IMR-90 (cell line): ENCODE measurements at regions of chr1 and their contacts with region 1.

Region 1: DNA sequence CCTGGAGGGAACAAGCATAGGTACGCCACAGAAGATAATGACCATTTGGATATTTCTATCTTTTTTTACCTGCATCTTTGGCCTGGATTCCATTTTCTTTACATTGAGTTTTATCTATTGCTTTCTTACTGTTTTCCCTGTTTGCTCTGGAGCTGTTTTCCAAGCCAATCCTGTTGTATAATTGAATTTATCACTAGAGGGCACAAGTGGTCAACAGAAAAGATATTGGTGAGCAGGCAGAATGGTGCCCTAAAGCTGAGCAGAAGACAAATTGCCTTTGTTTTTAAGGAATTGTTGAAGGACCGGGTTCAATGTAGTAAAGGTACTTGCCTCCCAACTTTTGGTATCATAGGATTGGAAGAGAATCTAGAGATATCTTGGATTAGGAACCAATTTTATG is 152.8 kb downstream of the PPP1R12B start:
- DNase-seq: peak; percentile 48
- ATAC-seq: peak; percentile 46
- H3K4me3 ChIP-seq: no peak overlapping the region
- H3K27ac ChIP-seq: no peak overlapping the region
- H3K4me1 ChIP-seq: peaks cover 5% of the 10 kb centered on the region; the same call in 1 of the 2 replicates
- H3K27me3 ChIP-seq: no peaks in the 10 kb centered on the region
- CTCF ChIP-seq: peak; percentile 58
- POLR2A ChIP-seq: no peak
- RAD21 ChIP-seq: peak; percentile 79

Region 2: GRCh38 chr1:202571347-202572339 is 70.4 kb after region 1 on chr1:
- CTCF ChIA-PET with region 1: interaction called, 5 read pairs
- POLR2A ChIA-PET with region 1: no interaction called
- dilution Hi-C with region 1: no loop called
- in situ Hi-C with region 1: no loop called
- intact Hi-C with region 1: loop called (anchors 1 kb)
- DNase-seq: peak; percentile 59
- ATAC-seq: peak; percentile 55
- H3K4me3 ChIP-seq: no peak overlapping the region
- H3K27ac ChIP-seq: no peak overlapping the region
- H3K4me1 ChIP-seq: peaks cover 29% of the 10 kb centered on the region
- H3K27me3 ChIP-seq: no peaks in the 10 kb centered on the region
- CTCF ChIP-seq: peak; percentile 86
- POLR2A ChIP-seq: no peak
- RAD21 ChIP-seq: peak; percentile 80

Region 3: DNA sequence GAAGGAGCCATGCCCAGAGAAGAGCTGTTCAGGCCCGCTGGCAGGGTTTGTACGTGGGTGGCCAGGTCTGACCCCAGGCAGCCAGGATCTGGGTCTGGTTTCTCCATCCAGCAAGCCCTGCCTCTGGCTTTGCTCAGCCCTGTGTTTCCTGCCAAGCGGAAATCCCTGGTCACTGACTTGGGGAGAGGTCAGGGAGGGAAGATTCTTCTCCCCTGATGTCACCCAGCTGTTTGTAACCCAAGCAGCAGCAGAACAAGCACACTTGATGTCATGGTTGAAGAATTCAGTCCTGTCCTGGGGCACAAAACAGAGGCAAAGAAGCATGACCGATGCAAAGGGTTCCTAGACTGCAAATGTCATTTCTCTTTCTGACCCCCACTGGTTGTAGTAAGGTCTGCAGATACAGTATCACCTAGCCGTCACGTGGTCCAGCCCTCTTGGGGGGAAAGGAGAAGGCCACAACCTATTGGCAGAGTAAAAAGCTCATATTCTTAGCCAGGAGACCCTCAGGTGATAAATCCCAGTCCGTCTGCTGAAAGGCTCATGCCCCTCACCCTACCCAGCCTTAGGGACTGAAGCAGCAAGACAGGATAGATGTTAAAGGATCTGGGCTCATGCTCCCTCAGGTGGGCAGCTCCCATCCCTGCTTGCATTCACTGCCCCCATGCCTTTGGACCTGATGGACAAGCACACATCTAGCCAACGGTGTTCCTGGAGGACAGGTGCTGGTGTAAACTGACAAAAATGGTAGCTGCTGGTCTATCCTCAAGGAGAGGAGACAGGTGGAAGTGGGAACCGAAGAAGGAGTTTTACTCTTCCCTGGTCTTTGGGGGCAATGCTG is 88.1 kb after region 1 on chr1:
- CTCF ChIA-PET with region 1: no interaction called
- POLR2A ChIA-PET with region 1: interaction called, 5 read pairs
- dilution Hi-C with region 1: no loop called
- in situ Hi-C with region 1: no loop called
- intact Hi-C with region 1: loop called (anchors 5 kb)
- DNase-seq: peak; percentile 100
- ATAC-seq: peak; percentile 87
- H3K4me3 ChIP-seq: no peak overlapping the region
- H3K27ac ChIP-seq: peak overlapping the region; percentile 79
- H3K4me1 ChIP-seq: peaks cover 48% of the 10 kb centered on the region
- H3K27me3 ChIP-seq: no peaks in the 10 kb centered on the region
- CTCF ChIP-seq: peak; percentile 21; the same call in 1 of the 2 replicates
- POLR2A ChIP-seq: no peak
- RAD21 ChIP-seq: peak; percentile 1; the same call in 1 of the 2 replicates

Region 4: GRCh38 chr1:202599677-202600431 is 98.6 kb after region 1 on chr1:
- CTCF ChIA-PET with region 1: interaction called, 9 read pairs
- POLR2A ChIA-PET with region 1: no interaction called
- dilution Hi-C with region 1: no loop called
- in situ Hi-C with region 1: no loop called
- intact Hi-C with region 1: loop called (anchors 1 kb)
- DNase-seq: peak; percentile 84
- ATAC-seq: peak; percentile 100
- H3K4me3 ChIP-seq: no peak overlapping the region
- H3K27ac ChIP-seq: peak overlapping the region; percentile 56; the same call in 1 of the 2 replicates
- H3K4me1 ChIP-seq: peaks cover 6% of the 10 kb centered on the region; the same call in 1 of the 2 replicates
- H3K27me3 ChIP-seq: no peaks in the 10 kb centered on the region
- CTCF ChIP-seq: peak; percentile 95
- POLR2A ChIP-seq: no peak
- RAD21 ChIP-seq: peak; percentile 96

Region 5: DNA sequence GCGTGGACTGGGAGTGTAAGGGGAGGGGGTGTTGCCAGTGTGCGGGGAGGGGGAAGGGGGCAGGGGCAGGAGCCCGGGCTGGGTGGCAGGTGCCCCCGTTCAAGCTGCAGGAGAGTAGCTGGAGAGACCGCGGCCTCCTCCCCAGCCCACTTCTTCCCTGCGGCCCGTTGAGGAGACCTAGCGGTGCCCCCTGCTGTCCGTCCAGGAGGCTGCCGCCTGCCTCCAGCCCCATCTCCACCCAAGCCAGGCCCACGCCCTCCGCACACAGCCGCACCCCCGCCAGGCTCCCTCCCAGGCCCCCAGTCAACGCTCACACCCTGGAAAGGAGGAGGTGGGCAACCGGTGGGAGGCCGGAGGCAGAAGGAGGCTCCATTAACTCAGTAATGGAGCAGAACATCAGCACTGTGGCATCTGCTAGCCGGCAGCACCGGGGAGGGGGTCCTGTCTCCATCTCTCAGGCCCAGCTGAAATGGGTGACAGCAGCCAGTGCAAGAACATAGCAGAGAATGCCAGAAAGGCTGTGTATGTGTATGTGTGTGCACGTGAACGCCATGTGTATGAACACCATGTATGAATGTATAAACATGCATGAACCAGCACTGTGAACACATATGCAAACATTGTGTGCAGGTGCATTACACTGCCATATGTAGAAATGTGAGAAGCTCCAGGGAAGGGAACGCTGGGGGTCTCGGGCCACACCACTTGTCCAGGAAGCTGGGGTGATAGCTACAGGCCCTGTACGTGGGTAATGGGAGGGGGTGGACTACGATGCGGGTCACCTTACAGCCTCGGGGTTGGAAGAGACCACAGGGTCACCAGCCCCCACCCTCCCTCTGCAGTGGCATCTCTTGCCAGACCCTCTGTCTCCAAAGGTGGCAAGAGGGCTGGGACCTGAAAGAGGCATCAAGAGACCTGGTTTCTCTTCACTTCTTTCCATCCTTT is 124.4 kb after region 1 on chr1:
- CTCF ChIA-PET with region 1: no interaction called
- POLR2A ChIA-PET with region 1: no interaction called
- dilution Hi-C with region 1: no loop called
- in situ Hi-C with region 1: no loop called
- intact Hi-C with region 1: loop called (anchors 1 kb)
- DNase-seq: peak; percentile 57
- ATAC-seq: peak; percentile 89
- H3K4me3 ChIP-seq: no peak overlapping the region
- H3K27ac ChIP-seq: no peak overlapping the region
- H3K4me1 ChIP-seq: peaks cover 7% of the 10 kb centered on the region
- H3K27me3 ChIP-seq: peaks cover 7% of the 10 kb centered on the region
- CTCF ChIP-seq: peak; percentile 71
- POLR2A ChIP-seq: no peak
- RAD21 ChIP-seq: peak; percentile 71

Region 6: DNA sequence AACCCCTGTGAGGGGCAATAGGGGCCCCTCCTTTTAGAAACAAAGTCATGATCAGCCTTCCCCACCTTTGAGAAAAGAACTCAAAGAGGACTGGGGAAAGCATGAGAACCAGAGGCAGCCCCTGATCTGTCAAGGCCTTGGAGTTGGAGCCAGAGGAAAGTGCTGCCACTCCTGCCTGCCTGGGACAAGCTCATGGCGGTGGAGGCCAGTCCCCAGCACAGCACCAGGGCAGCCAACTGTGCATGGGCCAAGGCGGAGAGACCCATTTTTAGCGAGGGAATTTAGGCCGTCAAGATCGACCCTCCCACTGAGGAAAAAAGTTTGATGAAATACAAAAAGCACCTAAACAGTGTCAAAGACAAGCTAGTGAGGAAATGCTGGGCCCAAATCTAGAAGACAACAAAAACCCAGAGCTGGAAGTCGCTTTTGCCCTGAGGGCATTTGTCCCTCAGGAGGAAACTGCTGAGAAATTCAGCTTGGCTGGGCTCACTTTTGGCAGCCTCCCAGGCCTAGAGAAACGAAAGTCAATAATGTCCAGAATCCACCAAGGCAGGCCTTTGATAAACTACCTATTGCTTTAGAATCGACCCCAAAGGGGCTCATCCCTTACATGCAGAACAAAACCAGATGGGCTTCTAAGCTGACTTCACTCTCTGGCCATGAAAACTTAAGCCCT is 170.0 kb after region 1 on chr1:
- CTCF ChIA-PET with region 1: no interaction called
- POLR2A ChIA-PET with region 1: no interaction called
- dilution Hi-C with region 1: no loop called
- in situ Hi-C with region 1: no loop called
- intact Hi-C with region 1: no loop called
- DNase-seq: no peak
- ATAC-seq: no peak
- H3K4me3 ChIP-seq: no peak overlapping the region
- H3K27ac ChIP-seq: no peak overlapping the region
- H3K4me1 ChIP-seq: no peaks in the 10 kb centered on the region
- H3K27me3 ChIP-seq: peaks cover 42% of the 10 kb centered on the region
- CTCF ChIP-seq: no peak
- POLR2A ChIP-seq: no peak
- RAD21 ChIP-seq: no peak

Region 7: GRCh38 chr1:202698276-202698675 is 197.0 kb after region 1 on chr1:
- CTCF ChIA-PET with region 1: no interaction called
- POLR2A ChIA-PET with region 1: no interaction called
- dilution Hi-C with region 1: no loop called
- in situ Hi-C with region 1: no loop called
- intact Hi-C with region 1: no loop called
- DNase-seq: no peak
- ATAC-seq: no peak
- H3K4me3 ChIP-seq: no peak overlapping the region
- H3K27ac ChIP-seq: no peak overlapping the region
- H3K4me1 ChIP-seq: no peaks in the 10 kb centered on the region
- H3K27me3 ChIP-seq: peaks cover 69% of the 10 kb centered on the region
- CTCF ChIP-seq: no peak
- POLR2A ChIP-seq: no peak
- RAD21 ChIP-seq: no peak

Region 8: GRCh38 chr1:202710070-202711045 is 209.1 kb after region 1 on chr1 and contains the start of gene SYT2:
- CTCF ChIA-PET with region 1: no interaction called
- POLR2A ChIA-PET with region 1: no interaction called
- dilution Hi-C with region 1: no loop called
- in situ Hi-C with region 1: loop called (anchors 10 kb)
- intact Hi-C with region 1: no loop called
- DNase-seq: no peak
- ATAC-seq: peak; percentile 83
- H3K4me3 ChIP-seq: peak within 1 kb of the TSS; percentile 26; the same call in 1 of the 2 replicates
- H3K27ac ChIP-seq: no peak within 1 kb of the TSS
- H3K4me1 ChIP-seq: peaks cover 4% of the 10 kb centered on the region; the same call in 1 of the 2 replicates
- H3K27me3 ChIP-seq: peaks cover 79% of the 10 kb centered on the region
- CTCF ChIP-seq: no peak
- POLR2A ChIP-seq: no peak
- RAD21 ChIP-seq: no peak
- total RNA-seq, gene SYT2: under 0.01 TPM in 2 replicates

Region 9: GRCh38 chr1:202716654-202717053 is 215.4 kb after region 1 on chr1:
- CTCF ChIA-PET with region 1: interaction called, 4 read pairs
- POLR2A ChIA-PET with region 1: no interaction called
- dilution Hi-C with region 1: no loop called
- in situ Hi-C with region 1: loop called (anchors 10 kb)
- intact Hi-C with region 1: loop called (anchors 1 kb)
- DNase-seq: no peak
- ATAC-seq: no peak
- H3K4me3 ChIP-seq: no peak overlapping the region
- H3K27ac ChIP-seq: no peak overlapping the region
- H3K4me1 ChIP-seq: no peaks in the 10 kb centered on the region
- H3K27me3 ChIP-seq: peaks cover 35% of the 10 kb centered on the region
- CTCF ChIP-seq: no peak
- POLR2A ChIP-seq: no peak
- RAD21 ChIP-seq: no peak

Region 10: DNA sequence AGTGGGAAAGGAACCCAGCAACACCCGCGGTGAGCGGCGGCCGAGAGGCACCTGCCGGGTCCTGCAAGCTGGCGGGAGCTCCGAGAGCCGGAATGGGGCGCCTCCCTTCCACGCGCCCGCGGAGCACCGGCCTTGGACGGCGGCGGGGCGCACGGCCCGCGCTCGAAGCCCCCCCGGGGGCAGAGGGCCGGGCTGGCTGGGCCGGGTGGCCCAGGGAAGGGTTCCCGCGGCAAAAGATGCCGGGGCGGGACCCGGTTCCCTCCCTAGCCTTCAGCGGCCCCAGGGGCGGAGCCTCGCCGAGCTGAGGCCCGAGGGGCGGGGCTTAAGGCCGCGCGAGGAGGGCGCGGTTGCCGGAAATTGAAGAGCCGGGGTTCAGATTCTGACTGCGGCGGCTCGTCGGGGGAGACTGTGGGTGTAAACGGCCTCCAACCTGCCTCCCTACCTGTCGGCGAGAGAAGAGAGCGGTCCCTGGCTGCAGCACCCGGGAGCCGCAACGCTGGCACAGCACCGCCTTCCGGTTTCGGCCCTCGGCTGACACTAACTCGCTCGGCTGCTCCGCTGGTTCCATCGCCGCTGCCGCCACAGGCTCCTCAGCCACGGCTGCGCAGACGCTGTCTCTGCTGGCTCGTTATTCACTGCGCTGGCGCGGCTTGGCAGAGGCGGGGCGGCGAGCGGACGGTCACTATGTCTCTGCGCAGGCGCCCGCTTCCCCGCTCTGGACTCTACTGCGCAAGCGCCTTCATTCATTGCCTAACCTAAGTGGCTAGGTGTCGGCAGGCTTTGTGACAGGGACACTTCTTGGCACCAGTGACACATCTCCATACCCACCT is 387.5 kb after region 1 on chr1 and contains the start of gene RABIF:
- CTCF ChIA-PET with region 1: no interaction called
- POLR2A ChIA-PET with region 1: no interaction called
- dilution Hi-C with region 1: no loop called
- in situ Hi-C with region 1: no loop called
- intact Hi-C with region 1: no loop called
- DNase-seq: peak; percentile 91
- ATAC-seq: peak; percentile 98
- H3K4me3 ChIP-seq: peak within 1 kb of the TSS; percentile 80
- H3K27ac ChIP-seq: peak within 1 kb of the TSS; percentile 85
- H3K4me1 ChIP-seq: no peaks in the 10 kb centered on the region
- H3K27me3 ChIP-seq: no peaks in the 10 kb centered on the region
- CTCF ChIP-seq: peak; percentile 32
- POLR2A ChIP-seq: peak; percentile 80
- RAD21 ChIP-seq: no peak
- total RNA-seq, gene RABIF: 4.8 and 6.9 TPM in 2 replicates

Region 11: DNA sequence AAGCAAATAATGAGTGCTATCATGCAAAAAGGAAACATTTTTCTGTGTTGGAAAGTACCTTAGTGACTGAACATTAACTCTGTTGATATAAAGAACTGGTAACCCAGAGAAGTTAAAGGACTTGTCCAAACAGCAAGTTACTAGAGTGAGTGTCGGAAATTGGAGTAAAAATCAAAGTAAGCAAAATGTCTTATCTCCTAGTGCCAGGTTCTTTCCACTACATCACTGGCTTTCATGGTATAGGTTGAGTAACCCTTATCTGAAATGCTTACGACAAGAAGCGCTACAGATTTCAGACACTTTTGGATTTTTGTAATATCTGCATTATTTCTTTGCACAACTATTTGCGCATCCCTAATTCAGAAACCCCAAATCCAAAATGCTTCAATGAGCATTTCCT is 404.1 kb after region 1 on chr1:
- CTCF ChIA-PET with region 1: no interaction called
- POLR2A ChIA-PET with region 1: no interaction called
- dilution Hi-C with region 1: no loop called
- in situ Hi-C with region 1: no loop called
- intact Hi-C with region 1: no loop called
- DNase-seq: no peak
- ATAC-seq: no peak
- H3K4me3 ChIP-seq: no peak overlapping the region
- H3K27ac ChIP-seq: no peak overlapping the region
- H3K4me1 ChIP-seq: no peaks in the 10 kb centered on the region
- H3K27me3 ChIP-seq: no peaks in the 10 kb centered on the region
- CTCF ChIP-seq: no peak
- POLR2A ChIP-seq: no peak
- RAD21 ChIP-seq: no peak